Sigmoid colon (tissue), 7 donors: ENCODE measurements at regions of chr7 and their contacts with region 1.

Region 1: GRCh38 chr7:32891800-32892520 is 400 bp upstream of the KBTBD2 start:
- DNase-seq: peak; percentile 98
- H3K4me3 ChIP-seq: peak overlapping the region; percentile 87 to 99 (median 90)
- H3K27ac ChIP-seq: peak overlapping the region; percentile 98 to 100 (median 98)
- H3K4me1 ChIP-seq: peaks cover 3 to 49% (median 34%) of the 10 kb centered on the region in 4 donors
- H3K27me3 ChIP-seq: no peaks in the 10 kb centered on the region
- CTCF ChIP-seq: no peak
- EP300 ChIP-seq: peak in 3 of 4 donors; percentile 13 to 64 (median 33)
- POLR2A ChIP-seq: peak; percentile 67 to 80

Region 2: DNA sequence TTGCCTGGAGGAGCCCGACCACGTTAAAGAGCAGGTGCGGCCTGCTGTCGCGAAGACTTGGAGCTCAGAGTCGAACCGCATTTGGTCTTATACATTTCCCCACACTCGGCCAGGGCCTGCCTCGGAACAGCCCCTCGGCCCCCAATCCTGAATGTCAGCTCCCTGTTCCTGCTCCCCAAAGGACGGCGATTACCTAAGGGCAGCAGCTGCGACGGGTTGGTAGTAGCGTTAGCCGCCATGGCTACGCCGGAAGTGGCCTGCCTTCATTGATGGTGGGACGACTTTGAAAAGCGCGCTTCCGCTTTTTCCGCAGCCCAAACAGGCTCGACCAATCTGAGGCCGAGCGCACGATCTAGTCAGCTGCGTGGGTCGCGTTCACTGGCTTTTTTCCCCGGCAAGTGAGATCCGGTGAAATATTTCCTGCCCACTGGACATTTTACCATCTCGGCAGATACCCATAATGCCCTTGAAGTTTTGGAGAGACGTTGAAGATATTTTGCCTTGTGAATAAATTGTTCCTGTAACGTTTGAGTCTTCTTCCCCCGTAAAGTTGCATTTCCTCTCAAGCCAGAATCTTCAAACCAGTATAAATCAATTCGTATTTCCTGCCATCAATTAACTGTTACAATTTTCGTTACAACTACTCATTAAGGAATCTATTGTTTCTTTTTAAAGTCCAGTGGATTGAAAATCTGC is 401.7 kb before region 1 on chr7 and contains the start of gene LSM5:
- intact Hi-C with region 1: loop called (anchors 5 kb)
- DNase-seq: peak; percentile 94
- H3K4me3 ChIP-seq: peak within 1 kb of the TSS; percentile 61 to 88 (median 69)
- H3K27ac ChIP-seq: peak within 1 kb of the TSS; percentile 77 to 89 (median 86)
- H3K4me1 ChIP-seq: peaks cover 0 to 25% (median 18%) of the 10 kb centered on the region in 4 donors
- H3K27me3 ChIP-seq: no peaks in the 10 kb centered on the region
- CTCF ChIP-seq: no peak
- EP300 ChIP-seq: no peak
- POLR2A ChIP-seq: no peak
- total RNA-seq, gene LSM5: 17.8 to 59.1 (median 23.1) TPM

Region 3: GRCh38 chr7:32569388-32570289 is 322.3 kb before region 1 on chr7:
- intact Hi-C with region 1: no loop called
- DNase-seq: no peak
- H3K4me3 ChIP-seq: no peak overlapping the region
- H3K27ac ChIP-seq: no peak overlapping the region
- H3K4me1 ChIP-seq: no peaks in the 10 kb centered on the region
- H3K27me3 ChIP-seq: no peaks in the 10 kb centered on the region
- CTCF ChIP-seq: no peak
- EP300 ChIP-seq: no peak
- POLR2A ChIP-seq: no peak

Region 4: GRCh38 chr7:32942786-32943653 is 51.1 kb after region 1 on chr7:
- intact Hi-C with region 1: loop called (anchors 2 kb)
- DNase-seq: peak; percentile 89
- H3K4me3 ChIP-seq: peak overlapping the region; percentile 71 to 95 (median 86)
- H3K27ac ChIP-seq: peak overlapping the region; percentile 96 to 98 (median 98)
- H3K4me1 ChIP-seq: peaks cover 0 to 36% (median 21%) of the 10 kb centered on the region in 4 donors
- H3K27me3 ChIP-seq: no peaks in the 10 kb centered on the region
- CTCF ChIP-seq: peak in 1 of 4 experiments; percentile 56
- EP300 ChIP-seq: no peak
- POLR2A ChIP-seq: no peak

Region 5: DNA sequence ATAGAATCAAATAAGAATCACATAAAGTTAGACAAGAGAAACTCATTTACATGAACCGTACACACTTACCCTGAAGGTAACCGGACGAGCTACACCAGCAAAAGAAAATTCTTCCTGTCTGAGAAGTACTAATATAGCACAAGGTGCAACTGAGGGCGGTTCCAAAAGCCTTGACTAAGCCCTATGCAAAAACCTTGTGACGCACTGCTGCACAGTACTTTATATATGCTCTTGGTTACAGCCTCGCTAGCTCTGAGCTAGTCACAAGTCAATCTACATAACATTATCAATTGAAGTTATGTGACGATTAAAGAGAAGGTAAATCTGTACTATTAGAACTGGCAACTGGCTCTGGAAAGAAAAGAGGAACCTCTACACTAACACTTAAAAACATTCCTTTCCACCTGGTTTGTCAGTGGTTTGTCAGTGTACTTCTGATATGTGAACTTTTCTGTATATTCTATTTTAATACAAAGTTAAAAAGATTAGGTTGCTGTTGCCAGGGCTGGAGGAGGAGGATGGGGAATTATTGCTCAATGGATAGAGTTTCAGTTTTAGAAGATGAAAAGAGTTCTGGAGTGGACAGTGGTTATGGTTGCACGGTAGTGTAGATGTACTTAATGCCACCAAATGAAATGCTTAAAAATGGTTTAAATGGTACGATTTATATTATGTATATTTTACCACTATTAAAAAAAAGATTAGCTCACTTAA is 149.0 kb after region 1 on chr7:
- intact Hi-C with region 1: loop called (anchors 5 kb)
- DNase-seq: no peak
- H3K4me3 ChIP-seq: peak overlapping the region in 2 of 4 donors; percentile 6 to 49
- H3K27ac ChIP-seq: peak overlapping the region; percentile 68 to 77 (median 71)
- H3K4me1 ChIP-seq: peaks cover 0 to 75% (median 55%) of the 10 kb centered on the region in 4 donors
- H3K27me3 ChIP-seq: no peaks in the 10 kb centered on the region
- CTCF ChIP-seq: no peak
- EP300 ChIP-seq: no peak
- POLR2A ChIP-seq: no peak

Region 6: GRCh38 chr7:33109005-33109757 is 217.2 kb after region 1 on chr7 and contains the start of gene RP9:
- intact Hi-C with region 1: loop called (anchors 5 kb)
- DNase-seq: peak; percentile 77
- H3K4me3 ChIP-seq: peak within 1 kb of the TSS; percentile 60 to 99 (median 97)
- H3K27ac ChIP-seq: peak within 1 kb of the TSS; percentile 82 to 89 (median 88)
- H3K4me1 ChIP-seq: peaks cover 0 to 39% (median 30%) of the 10 kb centered on the region in 4 donors
- H3K27me3 ChIP-seq: no peaks in the 10 kb centered on the region
- CTCF ChIP-seq: peak in 2 of 4 experiments; percentile 30 to 63
- EP300 ChIP-seq: no peak
- POLR2A ChIP-seq: no peak
- total RNA-seq, gene RP9: 6.9 to 24.6 (median 9.2) TPM